Activated CD4-positive, alpha-beta T cell treated with anti-CD3 and anti-CD28 coated beads for 36 hours (primary cell): ENCODE measurements at regions of chr11 and their contacts with region 1.

Region 1: GRCh38 chr11:18115360-18116127 is 9.7 kb upstream of the SAAL1 start:
- DNase-seq: peak; percentile 79
- ATAC-seq: peak; percentile 91
- H3K4me3 Mint-ChIP-seq: no peak overlapping the region
- H3K27ac Mint-ChIP-seq: no peak overlapping the region
- H3K4me1 Mint-ChIP-seq: peaks cover 6% of the 10 kb centered on the region
- H3K27me3 Mint-ChIP-seq: peaks cover 24% of the 10 kb centered on the region

Region 2: DNA sequence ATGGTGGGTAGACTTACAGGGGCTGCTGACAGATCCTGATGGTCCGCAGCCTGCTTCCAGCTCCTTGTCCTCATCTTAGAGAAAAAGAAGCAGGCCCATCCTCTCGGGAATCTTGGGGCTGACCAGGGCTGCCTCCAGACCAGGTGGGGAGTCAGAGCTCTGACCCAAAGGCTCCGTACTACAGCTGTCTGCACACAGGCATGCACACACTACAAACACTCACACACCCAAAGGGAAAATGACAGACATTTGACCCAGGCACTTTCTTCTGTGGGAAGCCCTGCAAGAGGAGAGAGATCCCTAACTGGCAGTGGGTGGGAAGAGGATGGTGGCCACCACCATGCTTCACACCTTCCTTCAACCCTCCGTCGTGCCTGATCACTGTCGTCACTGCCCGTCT is 443.1 kb before region 1 on chr11:
- CTCF ChIA-PET with region 1: no interaction called
- POLR2A ChIA-PET with region 1: no interaction called
- intact Hi-C with region 1: no loop called
- DNase-seq: no peak
- ATAC-seq: no peak
- H3K4me3 Mint-ChIP-seq: no peak overlapping the region
- H3K27ac Mint-ChIP-seq: no peak overlapping the region
- H3K4me1 Mint-ChIP-seq: no peaks in the 10 kb centered on the region
- H3K27me3 Mint-ChIP-seq: peaks cover 17% of the 10 kb centered on the region

Region 3: GRCh38 chr11:18145025-18145424 is 29.5 kb after region 1 on chr11:
- CTCF ChIA-PET with region 1: interaction called, 10 read pairs
- POLR2A ChIA-PET with region 1: no interaction called
- intact Hi-C with region 1: no loop called
- DNase-seq: peak; percentile 8
- ATAC-seq: no peak
- H3K4me3 Mint-ChIP-seq: no peak overlapping the region
- H3K27ac Mint-ChIP-seq: no peak overlapping the region
- H3K4me1 Mint-ChIP-seq: no peaks in the 10 kb centered on the region
- H3K27me3 Mint-ChIP-seq: peaks cover 23% of the 10 kb centered on the region

Region 4: GRCh38 chr11:18203723-18204122 is 88.2 kb after region 1 on chr11:
- CTCF ChIA-PET with region 1: interaction called, 19 read pairs
- POLR2A ChIA-PET with region 1: no interaction called
- intact Hi-C with region 1: loop called (anchors 1 kb)
- DNase-seq: peak; percentile 21
- ATAC-seq: no peak
- H3K4me3 Mint-ChIP-seq: no peak overlapping the region
- H3K27ac Mint-ChIP-seq: no peak overlapping the region
- H3K4me1 Mint-ChIP-seq: no peaks in the 10 kb centered on the region
- H3K27me3 Mint-ChIP-seq: peaks cover 33% of the 10 kb centered on the region

Region 5: GRCh38 chr11:18235394-18236334 is 120.1 kb after region 1 on chr11:
- CTCF ChIA-PET with region 1: no interaction called
- POLR2A ChIA-PET with region 1: no interaction called
- intact Hi-C with region 1: no loop called
- DNase-seq: no peak
- ATAC-seq: no peak
- H3K4me3 Mint-ChIP-seq: no peak overlapping the region
- H3K27ac Mint-ChIP-seq: no peak overlapping the region
- H3K4me1 Mint-ChIP-seq: no peaks in the 10 kb centered on the region
- H3K27me3 Mint-ChIP-seq: peaks cover 22% of the 10 kb centered on the region

Region 6: DNA sequence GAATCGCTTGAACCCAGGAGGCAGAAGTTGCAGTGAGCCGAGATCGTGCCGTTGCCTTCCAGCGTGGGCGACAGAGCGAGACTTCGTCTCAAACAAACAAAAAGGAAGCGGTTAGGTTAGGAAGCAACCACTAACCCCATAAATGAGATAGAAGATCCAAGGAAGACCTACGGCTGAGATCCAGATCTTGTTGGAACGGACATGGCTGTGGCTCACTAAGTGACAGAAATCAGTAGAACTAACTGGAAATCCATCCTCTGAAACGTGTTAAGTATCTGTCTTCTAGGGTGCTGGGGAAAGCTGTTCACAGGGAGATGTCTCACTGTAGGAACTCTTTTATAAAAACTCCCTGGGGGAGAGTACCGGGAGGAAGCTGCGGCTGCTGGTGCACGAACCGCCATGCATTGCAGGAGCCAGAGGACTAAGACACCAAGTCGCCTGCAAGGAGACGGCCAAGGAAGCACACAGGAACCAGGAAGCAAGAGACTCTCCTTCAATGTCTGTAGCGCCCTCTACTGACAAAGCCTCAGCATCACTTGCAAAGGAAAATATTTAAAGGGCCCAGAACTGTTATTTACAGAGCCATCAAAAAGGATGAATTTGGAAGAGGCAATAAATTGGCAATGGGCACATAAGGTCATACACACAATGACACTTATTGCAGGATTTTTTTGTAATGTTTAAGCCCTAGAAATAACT is 535.5 kb after region 1 on chr11:
- CTCF ChIA-PET with region 1: interaction called, 3 read pairs
- POLR2A ChIA-PET with region 1: no interaction called
- intact Hi-C with region 1: loop called in 1 of 2 experiments (anchors 5 kb)
- DNase-seq: peak; percentile 66
- ATAC-seq: peak; percentile 74
- H3K4me3 Mint-ChIP-seq: no peak overlapping the region
- H3K27ac Mint-ChIP-seq: no peak overlapping the region
- H3K4me1 Mint-ChIP-seq: no peaks in the 10 kb centered on the region
- H3K27me3 Mint-ChIP-seq: no peaks in the 10 kb centered on the region

Region 7: DNA sequence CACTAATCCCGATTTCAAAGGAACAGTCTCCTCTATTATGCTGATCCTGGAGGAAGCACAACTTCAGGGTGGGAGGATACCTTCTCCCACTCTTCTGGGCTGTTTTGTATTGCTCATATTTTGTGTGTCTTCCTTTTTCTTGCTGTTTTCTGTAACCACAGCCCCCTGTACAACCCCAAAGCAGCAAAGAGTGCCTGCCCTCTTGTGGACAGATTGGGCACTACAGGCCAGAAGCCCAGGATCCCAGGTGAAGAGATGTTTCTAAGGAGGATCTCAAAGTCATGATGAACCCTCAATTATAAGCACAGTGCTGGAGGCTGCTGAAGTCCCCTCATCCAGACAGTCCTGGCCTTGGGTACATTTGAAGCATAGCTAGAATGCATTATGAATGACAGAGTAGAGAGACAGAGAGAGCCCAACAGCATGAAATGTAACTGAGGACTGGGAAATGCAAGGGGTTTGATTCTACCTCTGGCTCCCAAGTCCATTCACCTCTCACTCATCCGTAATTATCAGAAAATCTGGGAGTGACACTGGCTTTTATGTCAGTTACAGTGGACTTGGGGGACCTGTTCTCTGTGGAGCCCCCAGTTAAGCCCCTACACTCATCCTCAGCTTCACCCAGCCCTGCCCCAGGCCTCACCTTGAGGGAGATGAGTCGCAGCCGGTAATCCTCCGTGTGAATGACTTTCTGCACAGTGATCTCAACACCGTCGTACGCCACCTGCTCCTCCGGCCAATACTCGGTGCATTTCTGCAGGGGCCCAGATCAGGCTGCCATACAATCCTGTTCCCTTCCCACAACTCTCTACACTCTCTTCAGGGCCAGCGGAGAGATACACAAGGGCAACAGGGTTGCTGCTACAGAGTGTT is 616.6 kb after region 1 on chr11:
- CTCF ChIA-PET with region 1: interaction called, 5 read pairs
- POLR2A ChIA-PET with region 1: no interaction called
- intact Hi-C with region 1: loop called (anchors 1 to 5 kb)
- DNase-seq: peak; percentile 78
- ATAC-seq: peak; percentile 73
- H3K4me3 Mint-ChIP-seq: no peak overlapping the region
- H3K27ac Mint-ChIP-seq: no peak overlapping the region
- H3K4me1 Mint-ChIP-seq: peaks cover 3% of the 10 kb centered on the region
- H3K27me3 Mint-ChIP-seq: no peaks in the 10 kb centered on the region

Region 8: GRCh38 chr11:18768472-18768901 is 652.9 kb after region 1 on chr11:
- CTCF ChIA-PET with region 1: interaction called, 6 read pairs
- POLR2A ChIA-PET with region 1: no interaction called
- intact Hi-C with region 1: loop called (anchors 1 kb)
- DNase-seq: no peak
- ATAC-seq: peak; percentile 63
- H3K4me3 Mint-ChIP-seq: no peak overlapping the region
- H3K27ac Mint-ChIP-seq: no peak overlapping the region
- H3K4me1 Mint-ChIP-seq: peaks cover 11% of the 10 kb centered on the region
- H3K27me3 Mint-ChIP-seq: peaks cover 19% of the 10 kb centered on the region

Region 9: DNA sequence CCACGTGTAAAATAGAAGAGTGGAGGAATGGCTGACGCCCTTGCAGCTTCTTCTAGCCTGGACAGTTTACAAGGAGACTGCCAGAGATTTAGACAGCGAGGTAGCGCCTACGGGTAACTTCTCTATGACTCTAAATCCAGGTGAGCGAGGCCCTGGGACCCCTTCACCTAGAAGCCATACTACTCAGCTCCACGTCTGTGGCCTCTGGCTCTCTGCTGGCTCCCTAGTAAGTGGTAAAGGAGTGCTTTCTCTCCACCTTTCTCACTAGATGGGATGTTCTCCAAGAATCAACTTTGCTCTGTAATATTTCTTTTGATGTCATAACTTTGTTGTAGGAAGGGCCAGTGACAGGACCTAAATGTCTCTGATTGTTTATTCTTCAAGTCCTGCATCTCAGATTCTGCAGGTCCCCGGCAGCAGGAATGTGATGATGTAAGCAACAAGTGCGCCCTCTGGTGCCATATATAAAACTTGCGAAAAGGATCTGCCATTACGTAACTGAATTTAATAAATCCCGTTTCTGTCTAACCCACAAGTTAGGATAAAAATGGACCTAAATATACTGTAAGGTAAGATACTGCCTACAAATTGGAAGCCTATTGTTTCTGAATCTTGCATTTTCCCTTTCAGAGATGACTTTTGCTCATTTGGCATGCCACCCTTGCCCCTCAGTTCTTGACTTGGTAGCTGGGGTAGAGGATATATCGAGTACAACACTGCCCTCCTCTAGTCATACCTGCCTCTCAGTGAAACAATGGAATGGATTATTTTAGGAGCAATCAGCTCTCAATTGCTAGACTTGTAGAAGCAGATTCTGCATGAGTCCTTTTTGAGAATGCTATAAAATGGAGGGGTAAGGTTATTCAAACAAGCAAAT is 687.1 kb after region 1 on chr11:
- CTCF ChIA-PET with region 1: interaction called, 4 read pairs
- POLR2A ChIA-PET with region 1: no interaction called
- intact Hi-C with region 1: loop called in 1 of 2 experiments (anchors 1 kb)
- DNase-seq: peak; percentile 60
- ATAC-seq: no peak
- H3K4me3 Mint-ChIP-seq: no peak overlapping the region
- H3K27ac Mint-ChIP-seq: no peak overlapping the region
- H3K4me1 Mint-ChIP-seq: peaks cover 1% of the 10 kb centered on the region
- H3K27me3 Mint-ChIP-seq: peaks cover 9% of the 10 kb centered on the region